MCF 10A (cell line): ENCODE measurements at regions of chr7 and their contacts with region 1.

Region 1: GRCh38 chr7:126803060-126803665 is 449.6 kb downstream of the GRM8 start:
- DNase-seq: peak; percentile 74
- H3K4me3 Mint-ChIP-seq: no peak overlapping the region
- H3K27ac Mint-ChIP-seq: no peak overlapping the region
- H3K4me1 Mint-ChIP-seq: no peaks in the 10 kb centered on the region
- H3K27me3 Mint-ChIP-seq: peaks cover 25% of the 10 kb centered on the region
- CTCF ChIP-seq: peak; percentile 78

Region 2: DNA sequence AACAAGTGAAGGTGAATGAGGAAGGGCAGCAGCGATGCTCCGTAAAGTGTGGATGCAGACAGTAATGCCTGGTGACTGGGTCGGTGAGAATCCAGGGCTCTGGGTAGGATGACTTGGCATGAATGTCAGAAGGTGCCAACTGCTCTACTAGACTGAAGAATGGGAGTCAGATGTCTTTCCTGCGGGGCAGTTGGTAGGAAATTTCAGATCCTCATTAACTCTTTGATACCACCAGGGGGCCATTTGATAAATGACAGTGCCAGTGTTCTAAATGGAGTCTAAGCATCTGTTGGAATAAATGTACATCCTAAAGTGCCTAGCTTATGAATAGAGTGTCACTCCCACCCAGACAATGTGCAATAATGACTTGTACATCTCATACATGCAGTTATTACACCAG is 12.4 kb before region 1 on chr7:
- CTCF ChIA-PET with region 1: interaction called, 22 read pairs
- POLR2A ChIA-PET with region 1: no interaction called
- intact Hi-C with region 1: no loop called
- DNase-seq: peak; percentile 6
- H3K4me3 Mint-ChIP-seq: no peak overlapping the region
- H3K27ac Mint-ChIP-seq: no peak overlapping the region
- H3K4me1 Mint-ChIP-seq: peaks cover 6% of the 10 kb centered on the region
- H3K27me3 Mint-ChIP-seq: no peaks in the 10 kb centered on the region
- CTCF ChIP-seq: no peak

Region 3: GRCh38 chr7:126818393-126819196 is 15.4 kb after region 1 on chr7:
- CTCF ChIA-PET with region 1: interaction called, 16 read pairs
- POLR2A ChIA-PET with region 1: no interaction called
- intact Hi-C with region 1: no loop called
- DNase-seq: no peak
- H3K4me3 Mint-ChIP-seq: no peak overlapping the region
- H3K27ac Mint-ChIP-seq: no peak overlapping the region
- H3K4me1 Mint-ChIP-seq: peaks cover 6% of the 10 kb centered on the region
- H3K27me3 Mint-ChIP-seq: peaks cover 18% of the 10 kb centered on the region
- CTCF ChIP-seq: no peak

Region 4: GRCh38 chr7:127047521-127047920 is 244.4 kb after region 1 on chr7:
- CTCF ChIA-PET with region 1: no interaction called
- POLR2A ChIA-PET with region 1: no interaction called
- intact Hi-C with region 1: no loop called
- DNase-seq: no peak
- H3K4me3 Mint-ChIP-seq: no peak overlapping the region
- H3K27ac Mint-ChIP-seq: no peak overlapping the region
- H3K4me1 Mint-ChIP-seq: no peaks in the 10 kb centered on the region
- H3K27me3 Mint-ChIP-seq: peaks cover 14% of the 10 kb centered on the region
- CTCF ChIP-seq: no peak